ENCODE measurements at regions of chr12 and their contacts with region 1.

Region 1: DNA sequence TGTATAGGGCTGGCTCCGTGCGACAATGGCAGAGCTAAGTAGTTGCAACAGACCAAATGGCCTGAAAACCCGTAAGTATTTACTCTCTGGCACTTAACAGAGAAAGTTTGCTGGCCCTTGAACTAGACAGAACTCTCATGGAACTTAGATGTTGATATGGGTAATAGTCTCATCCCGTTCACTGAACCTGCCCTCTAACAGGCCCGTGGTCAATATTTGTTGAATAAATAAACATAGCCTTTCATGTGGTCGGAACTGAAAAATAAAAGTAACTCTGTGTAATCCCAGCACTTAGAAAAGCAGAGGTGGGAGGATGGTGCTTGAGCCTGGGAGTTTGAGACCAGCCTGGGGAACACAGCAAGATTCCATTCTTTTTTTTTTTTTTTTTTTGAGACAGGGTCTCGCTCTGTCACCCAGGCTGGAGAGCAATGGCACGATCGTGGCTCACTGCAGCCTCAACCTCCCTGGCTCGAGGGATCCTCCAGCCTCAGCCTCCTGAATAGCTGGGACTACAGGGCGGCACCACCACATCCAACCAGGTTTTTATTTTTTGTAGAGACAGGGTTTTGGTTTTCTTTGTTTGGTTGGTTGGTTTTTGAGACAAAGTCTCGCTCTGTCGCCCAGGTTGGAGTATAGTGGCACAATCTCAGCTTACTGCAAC is 29.7 kb downstream of the KDM2B start:
- DNase-seq: no peak
- H3K4me3 Mint-ChIP-seq: no peak overlapping the region
- H3K27ac Mint-ChIP-seq: no peak overlapping the region
- H3K4me1 Mint-ChIP-seq: peaks cover 23% of the 10 kb centered on the region
- H3K27me3 Mint-ChIP-seq: no peaks in the 10 kb centered on the region

Region 2: DNA sequence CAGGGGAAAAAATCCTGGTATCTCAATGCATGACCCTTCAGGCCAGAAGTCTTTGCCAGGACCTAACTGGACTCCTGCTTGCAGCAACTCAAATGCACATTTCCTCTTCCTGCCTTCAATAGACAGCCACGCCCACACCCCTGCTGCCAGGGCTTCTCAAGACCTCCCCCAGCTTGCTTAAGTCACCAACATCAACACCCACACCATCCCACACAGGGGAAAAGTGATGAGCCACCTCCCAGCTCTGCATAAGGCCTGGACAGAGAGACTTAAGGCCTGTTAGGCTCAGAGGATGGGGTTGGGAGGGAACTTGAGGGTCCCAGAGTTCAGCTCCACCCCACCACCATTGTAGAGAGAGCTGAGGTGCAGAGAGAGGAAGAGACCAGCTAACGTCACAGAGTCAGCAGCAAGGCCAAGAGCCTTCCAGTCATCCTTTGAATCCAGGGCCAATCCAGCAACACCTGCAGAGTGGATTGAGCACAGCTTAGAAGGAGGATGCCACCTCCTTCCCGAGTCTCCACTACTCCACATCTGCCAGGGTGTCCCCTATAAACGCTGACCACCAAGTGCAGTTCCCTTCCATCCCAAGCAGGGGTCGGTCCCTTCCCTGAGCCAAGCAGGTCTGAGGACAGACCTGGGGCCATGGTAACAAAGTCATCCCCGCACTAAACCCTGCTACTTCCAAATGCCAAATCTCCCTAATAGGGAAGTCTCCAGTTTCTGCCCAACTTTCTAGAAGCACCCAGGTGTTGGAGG is 20.3 kb before region 1 on chr12:
- CTCF ChIA-PET with region 1: no interaction called
- DNase-seq: peak; percentile 85
- H3K4me3 Mint-ChIP-seq: no peak overlapping the region
- H3K27ac Mint-ChIP-seq: peak overlapping the region; percentile 78
- H3K4me1 Mint-ChIP-seq: peaks cover 46% of the 10 kb centered on the region
- H3K27me3 Mint-ChIP-seq: no peaks in the 10 kb centered on the region

Region 3: DNA sequence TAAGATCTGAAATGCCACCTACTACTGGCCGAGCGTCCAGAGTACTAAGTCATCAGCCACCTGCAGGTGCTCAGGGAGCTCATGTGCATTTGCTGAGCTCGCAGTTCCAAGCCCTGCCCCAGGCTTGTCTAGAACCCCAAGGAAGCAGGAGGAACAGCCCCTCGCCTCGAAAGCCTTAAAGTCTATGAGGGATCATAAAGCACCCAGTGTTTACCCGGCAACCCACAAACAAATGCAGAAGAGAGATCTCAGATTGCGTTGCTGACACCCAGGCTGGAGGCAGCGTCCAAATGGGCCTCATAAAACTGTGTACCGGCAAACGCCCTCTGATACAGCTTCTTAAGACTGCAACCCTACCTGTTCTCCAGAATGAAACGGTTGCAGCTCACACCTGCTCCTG is 22.9 kb after region 1 on chr12:
- CTCF ChIA-PET with region 1: interaction called, 11 read pairs
- DNase-seq: no peak
- H3K4me3 Mint-ChIP-seq: no peak overlapping the region
- H3K27ac Mint-ChIP-seq: no peak overlapping the region
- H3K4me1 Mint-ChIP-seq: peaks cover 30% of the 10 kb centered on the region
- H3K27me3 Mint-ChIP-seq: no peaks in the 10 kb centered on the region

Region 4: DNA sequence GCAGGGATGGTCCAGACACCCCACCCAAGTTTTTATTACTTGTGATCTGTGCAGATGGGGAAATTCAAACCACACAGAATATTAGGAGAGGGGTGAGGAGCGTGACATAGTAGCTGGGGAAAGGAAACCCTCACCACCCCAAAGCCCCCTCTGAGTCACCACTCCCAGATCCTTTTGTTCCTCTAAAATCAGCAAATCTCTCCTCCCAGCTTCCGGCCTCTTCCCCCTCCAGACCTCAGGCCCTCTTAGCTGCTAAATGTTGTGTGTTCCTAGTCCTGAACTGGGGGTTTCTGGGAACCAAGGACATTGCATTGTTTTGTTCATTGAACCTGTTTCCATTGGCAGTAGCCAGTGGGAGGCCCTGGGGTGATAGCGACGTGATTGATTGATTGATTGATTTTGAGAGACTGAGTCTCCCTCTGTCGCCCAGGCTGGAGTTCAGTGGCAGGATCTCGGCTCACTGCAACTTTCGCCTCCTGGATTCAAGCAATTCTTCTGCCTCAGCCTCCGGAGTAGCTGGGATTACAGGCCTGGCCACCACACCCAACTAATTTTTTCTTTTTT is 69.3 kb after region 1 on chr12:
- CTCF ChIA-PET with region 1: interaction called, 61 read pairs
- DNase-seq: no peak
- H3K4me3 Mint-ChIP-seq: no peak overlapping the region
- H3K27ac Mint-ChIP-seq: peak overlapping the region; percentile 62
- H3K4me1 Mint-ChIP-seq: peaks cover 27% of the 10 kb centered on the region
- H3K27me3 Mint-ChIP-seq: no peaks in the 10 kb centered on the region

Region 5: DNA sequence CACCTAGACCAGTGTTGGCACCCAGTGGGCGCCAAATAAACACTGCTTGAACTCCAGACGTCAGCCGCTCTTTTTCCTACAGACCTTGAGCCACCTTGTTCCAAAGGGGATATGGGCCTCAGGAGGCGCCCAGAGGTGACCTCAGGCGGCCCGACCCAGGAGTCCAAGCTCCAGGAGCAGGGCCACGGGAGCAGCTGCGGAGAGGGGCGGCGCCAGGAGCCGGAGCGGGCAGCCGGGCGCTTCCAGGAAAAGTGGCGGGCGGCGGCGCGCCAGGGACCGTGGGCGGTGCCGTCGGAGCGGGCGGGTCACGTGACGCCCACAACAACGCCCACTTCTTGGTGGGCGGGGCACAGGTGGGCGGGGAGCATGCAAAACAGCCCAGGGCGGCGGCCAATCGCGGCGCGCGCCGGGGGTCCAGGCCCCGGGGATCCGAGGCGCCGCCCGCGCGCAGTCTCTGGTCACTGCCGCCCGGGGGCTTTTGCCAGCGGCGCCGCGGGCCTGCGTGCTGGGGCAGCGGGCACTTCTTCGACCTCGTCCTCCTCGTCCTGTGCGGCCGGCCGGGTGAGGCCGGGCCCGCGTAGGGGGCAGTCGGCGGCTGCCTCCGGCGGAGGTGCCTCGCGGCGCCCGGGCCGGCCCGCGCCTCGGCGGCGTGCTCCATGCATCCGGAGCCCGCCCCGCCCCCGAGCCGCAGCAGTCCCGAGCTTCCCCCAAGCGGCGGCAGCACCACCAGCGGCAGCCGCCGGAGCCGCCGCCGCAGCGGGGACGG is 75.2 kb after region 1 on chr12 and contains the start of gene ORAI1:
- CTCF ChIA-PET with region 1: interaction called, 61 read pairs
- DNase-seq: peak; percentile 96
- H3K4me3 Mint-ChIP-seq: peak within 1 kb of the TSS; percentile 97
- H3K27ac Mint-ChIP-seq: peak within 1 kb of the TSS; percentile 96
- H3K4me1 Mint-ChIP-seq: peaks cover 45% of the 10 kb centered on the region
- H3K27me3 Mint-ChIP-seq: no peaks in the 10 kb centered on the region

Region 6: DNA sequence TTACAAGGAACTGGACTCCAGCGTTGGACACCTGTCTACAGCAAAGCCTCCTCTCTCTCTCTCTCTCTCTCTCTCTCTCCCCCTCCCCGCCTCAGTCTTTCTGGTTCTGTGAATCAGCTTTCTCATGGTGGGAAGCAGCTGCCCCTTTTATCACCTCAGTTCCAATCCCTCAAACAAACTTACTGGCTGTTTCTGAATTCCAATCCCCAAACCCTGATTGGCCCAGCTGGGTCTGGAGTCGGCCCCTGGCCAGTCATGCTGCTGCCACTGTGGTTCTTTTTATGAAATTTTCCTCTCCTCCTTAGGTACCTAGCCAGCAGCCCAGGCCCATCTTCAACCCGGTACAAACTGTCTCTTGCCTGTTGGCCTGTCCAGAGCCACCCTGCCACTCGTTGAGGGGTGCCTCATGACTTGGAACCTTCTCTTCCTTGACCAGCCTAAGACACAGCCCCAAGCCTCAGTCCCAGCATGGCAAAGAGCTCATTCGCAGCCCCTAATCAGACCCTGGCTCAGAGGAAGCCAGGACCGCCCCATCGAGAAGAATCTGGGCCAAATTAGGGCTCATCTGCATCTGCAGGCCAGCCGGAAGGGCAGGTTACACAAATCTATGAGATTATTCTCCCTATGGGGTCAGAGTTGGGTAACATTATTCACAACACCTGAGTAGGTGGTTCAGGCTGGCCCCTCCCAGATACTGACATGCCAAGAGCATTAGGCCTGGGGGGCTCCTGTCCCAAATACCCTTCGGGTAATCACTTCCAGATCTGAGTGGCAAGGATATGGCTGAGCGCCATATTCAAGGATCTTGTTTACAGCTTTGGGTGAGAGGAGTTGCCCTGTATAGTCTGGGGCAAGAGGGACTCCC is 127.8 kb after region 1 on chr12:
- CTCF ChIA-PET with region 1: interaction called, 67 read pairs
- DNase-seq: no peak
- H3K4me3 Mint-ChIP-seq: no peak overlapping the region
- H3K27ac Mint-ChIP-seq: no peak overlapping the region
- H3K4me1 Mint-ChIP-seq: peaks cover 33% of the 10 kb centered on the region
- H3K27me3 Mint-ChIP-seq: no peaks in the 10 kb centered on the region